Spleen (tissue), 13 donors: ENCODE measurements at regions of chr7 and their contacts with region 1.

Region 1: DNA sequence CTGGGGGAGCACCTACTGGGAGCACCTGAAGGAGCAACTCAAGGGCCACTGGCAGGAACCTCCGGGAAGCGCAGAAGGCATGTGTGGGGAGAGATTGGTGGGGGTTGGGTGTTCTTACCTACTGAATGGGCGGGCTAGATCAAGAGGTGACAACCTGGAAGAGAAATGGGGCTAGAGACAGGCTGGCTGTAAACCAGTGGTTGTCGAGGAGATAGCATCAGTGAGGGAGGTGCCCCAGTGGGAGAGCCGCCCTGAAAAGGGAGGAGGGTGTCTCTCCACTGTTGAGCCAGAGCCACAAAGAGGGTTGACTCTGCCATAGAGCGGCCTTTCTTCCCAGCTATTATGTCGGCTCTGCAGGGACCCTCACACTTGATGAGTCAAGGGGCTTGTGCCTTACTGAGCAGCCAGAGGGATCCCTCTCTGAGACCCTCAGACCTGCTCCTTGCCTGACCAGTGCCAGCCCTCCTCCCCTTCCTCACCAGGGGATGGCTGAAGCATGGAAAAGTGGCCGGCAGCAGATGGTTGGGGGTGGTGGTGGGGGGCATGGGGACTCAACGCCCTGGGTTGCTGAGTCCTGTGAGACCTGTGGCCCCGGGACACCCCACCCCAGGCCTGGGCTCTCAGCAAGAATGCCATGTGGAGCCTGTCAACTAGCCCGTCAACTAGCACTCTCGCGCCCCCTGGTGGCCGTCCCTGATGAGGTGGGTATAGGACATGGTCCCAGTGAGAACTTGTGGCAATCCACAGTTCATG is 36.5 kb upstream of the PURB start:
- DNase-seq: peak; percentile 98
- H3K4me3 ChIP-seq: no peak overlapping the region
- H3K27ac ChIP-seq: no peak overlapping the region
- H3K4me1 ChIP-seq: peaks cover 0 to 7% (median 6%) of the 10 kb centered on the region in 6 donors
- H3K27me3 ChIP-seq: no peaks in the 10 kb centered on the region
- CTCF ChIP-seq: peak; percentile 71 to 91 (median 83)
- POLR2A ChIP-seq: no peak

Region 2: DNA sequence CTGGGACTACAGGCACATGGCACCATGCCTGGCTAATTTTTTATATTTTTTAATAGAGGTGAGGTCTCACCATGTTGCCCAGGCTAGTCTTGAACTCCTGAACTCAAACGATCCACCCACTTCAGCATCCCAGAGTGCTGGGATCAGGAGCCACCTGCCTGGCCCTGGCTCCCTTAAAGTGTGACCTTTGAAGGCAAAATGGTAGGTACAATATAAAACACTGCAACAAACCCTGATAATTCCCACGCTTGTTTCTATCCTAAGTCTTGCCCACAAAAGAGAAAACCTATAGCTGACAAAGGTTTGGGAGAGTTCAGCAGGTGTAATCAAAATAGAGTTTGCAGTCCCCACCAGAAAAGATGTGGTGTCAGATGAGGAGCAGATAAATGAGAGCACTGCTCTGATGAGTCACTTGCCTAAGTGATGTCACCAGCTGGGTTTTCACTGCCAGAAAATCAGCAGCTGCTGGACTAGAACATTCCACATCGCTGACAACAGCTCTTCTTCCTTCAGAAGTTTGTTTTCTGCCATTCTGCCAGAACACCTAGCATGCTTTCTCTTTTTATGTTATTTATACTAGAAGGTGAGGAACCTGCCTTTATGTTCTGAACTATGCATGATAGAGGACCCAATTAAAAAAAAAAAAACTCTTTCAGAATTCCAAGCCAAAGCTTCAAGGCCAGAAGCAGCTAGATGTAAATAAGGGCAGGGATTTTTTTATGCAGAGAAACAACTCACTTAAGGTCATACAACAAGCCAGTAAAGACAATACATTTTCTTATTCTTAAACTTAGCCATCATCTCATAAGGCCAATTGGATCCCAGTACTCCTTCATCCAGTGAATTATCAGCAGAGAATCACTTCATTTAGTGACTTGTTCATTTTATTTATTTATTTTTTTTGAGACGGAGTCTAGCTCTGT is 54.4 kb before region 1 on chr7:
- intact Hi-C with region 1: loop called (anchors 5 kb)
- DNase-seq: no peak
- H3K4me3 ChIP-seq: no peak overlapping the region
- H3K27ac ChIP-seq: no peak overlapping the region
- H3K4me1 ChIP-seq: no peaks in the 10 kb centered on the region
- H3K27me3 ChIP-seq: peaks cover 0 to under 1% (median 0%) of the 10 kb centered on the region in 7 donors
- CTCF ChIP-seq: no peak
- POLR2A ChIP-seq: no peak

Region 3: DNA sequence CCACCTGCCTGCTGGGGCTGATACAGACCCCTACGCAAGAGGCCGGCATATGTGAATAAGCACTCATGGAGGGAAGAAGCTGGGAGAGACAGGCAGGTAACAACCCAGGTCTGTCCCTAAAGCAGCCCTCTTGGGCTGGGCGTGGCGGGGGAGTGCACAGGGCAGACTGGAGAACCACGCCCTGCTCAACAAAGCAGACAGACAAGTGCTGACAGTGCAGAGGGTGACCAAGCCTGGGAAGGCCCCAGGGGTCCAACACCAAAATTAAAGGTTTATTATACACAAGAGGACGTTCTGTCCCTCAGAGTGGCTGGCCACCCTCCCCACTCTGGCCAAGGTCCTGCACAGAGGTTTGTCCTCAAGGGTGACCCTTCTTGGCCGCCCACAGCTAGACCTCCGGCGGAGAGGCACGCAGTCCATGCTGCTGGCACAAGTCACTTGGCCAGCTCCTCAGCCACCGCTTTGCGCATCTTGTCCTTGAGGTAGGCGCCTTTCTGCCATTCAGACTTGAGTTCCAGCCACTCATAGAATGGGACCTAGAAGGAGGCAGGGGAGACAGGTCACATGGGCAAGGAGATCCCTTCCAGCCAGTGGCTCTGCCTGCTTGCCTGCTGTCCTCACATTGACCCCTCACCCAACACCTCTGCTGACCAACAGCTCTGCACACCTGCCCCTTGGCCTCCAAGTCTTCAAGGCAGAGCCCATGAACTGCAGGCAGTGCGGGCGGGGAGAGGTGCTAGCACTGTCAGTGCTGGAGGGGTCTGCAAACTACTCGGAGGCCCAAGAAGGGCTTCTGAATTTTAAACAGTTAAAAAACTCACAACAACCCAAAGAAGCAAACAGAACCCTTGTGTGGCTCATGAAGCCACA is 178.3 kb after region 1 on chr7:
- intact Hi-C with region 1: no loop called
- DNase-seq: peak; percentile 73
- H3K4me3 ChIP-seq: no peak overlapping the region
- H3K27ac ChIP-seq: no peak overlapping the region
- H3K4me1 ChIP-seq: peaks cover 0 to 5% (median 0%) of the 10 kb centered on the region in 6 donors
- H3K27me3 ChIP-seq: no peaks in the 10 kb centered on the region
- CTCF ChIP-seq: no peak
- POLR2A ChIP-seq: no peak